ENCODE measurements at regions of chr10 and their contacts with region 1.

Region 1: DNA sequence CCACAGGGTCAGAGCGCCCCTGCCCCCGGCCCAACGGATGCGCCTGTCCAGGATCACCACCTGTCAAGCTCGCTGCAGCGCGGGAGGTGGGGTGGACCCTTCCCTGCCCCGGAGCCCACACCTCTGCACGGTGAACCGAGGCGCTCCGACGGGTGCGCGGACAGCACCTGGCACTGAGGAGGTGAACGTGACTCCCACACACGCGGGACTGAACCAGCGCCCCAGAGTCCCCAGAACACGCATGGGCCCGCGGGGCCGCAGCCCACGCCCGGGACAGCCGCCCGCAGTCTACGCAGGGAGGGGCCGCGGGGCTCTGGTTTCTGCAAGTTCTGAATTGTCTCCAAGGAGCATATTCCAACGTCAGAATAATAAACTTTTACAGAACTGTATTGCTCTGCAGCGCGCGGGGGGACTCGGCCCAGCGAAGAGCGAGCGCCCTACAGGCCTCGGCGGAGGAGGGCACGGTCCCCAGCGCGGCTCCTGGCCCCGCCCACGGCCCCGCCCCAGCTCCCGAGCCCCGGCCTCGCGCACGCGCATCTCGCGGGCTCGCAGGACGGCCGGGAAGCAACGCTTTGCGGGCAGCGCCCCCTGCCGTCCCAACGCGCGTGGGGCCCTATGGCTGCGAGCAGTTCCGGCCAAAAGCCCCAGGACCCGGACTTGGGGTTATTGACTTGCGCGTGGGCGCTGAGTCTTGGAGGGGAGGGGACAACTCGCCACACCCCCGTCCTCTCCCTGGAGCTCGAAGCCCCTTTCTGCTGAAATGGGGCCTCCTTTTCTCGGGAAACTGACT is 29.7 kb downstream of the OAT start:
- DNase-seq: peak; percentile 72
- ATAC-seq: peak; percentile 96
- H3K4me3 ChIP-seq: peak overlapping the region; percentile 22 to 29; a peak in 3 of 4 replicates
- H3K27ac ChIP-seq: peak overlapping the region; percentile 15; the same call in 1 of the 2 replicates
- H3K4me1 ChIP-seq: peaks cover 7 to 10% of the 10 kb centered on the region in 2 experiments
- H3K27me3 ChIP-seq: no peaks in the 10 kb centered on the region
- CTCF ChIP-seq: peak; percentile 96 to 98 (median 96)
- POLR2A ChIP-seq: peak; percentile 65
- RAD21 ChIP-seq: peak; percentile 100

Region 2: GRCh38 chr10:124092860-124093773 is 295.9 kb before region 1 on chr10 and contains the start of gene CHST15:
- CTCF ChIA-PET with region 1: interaction called, 5 read pairs
- POLR2A ChIA-PET with region 1: no interaction called
- RAD21 ChIA-PET with region 1: no interaction called
- intact Hi-C with region 1: loop called (anchors 5 kb)
- DNase-seq: peak; percentile 74
- ATAC-seq: peak; percentile 55
- H3K4me3 ChIP-seq: peak within 1 kb of the TSS; percentile 80 to 82
- H3K27ac ChIP-seq: peak within 1 kb of the TSS; percentile 93
- H3K4me1 ChIP-seq: peaks cover 25 to 44% of the 10 kb centered on the region in 2 experiments
- H3K27me3 ChIP-seq: no peaks in the 10 kb centered on the region
- CTCF ChIP-seq: peak in 1 of 3 experiments; percentile 18; a peak in 1 of 6 replicates
- POLR2A ChIP-seq: peak; percentile 46
- RAD21 ChIP-seq: no peak
- total RNA-seq, gene CHST15: 47.2 TPM

Region 3: GRCh38 chr10:124194199-124194824 is 194.7 kb before region 1 on chr10:
- CTCF ChIA-PET with region 1: interaction called, 8 read pairs
- POLR2A ChIA-PET with region 1: interaction called, 3 read pairs
- RAD21 ChIA-PET with region 1: no interaction called
- intact Hi-C with region 1: loop called (anchors 5 kb)
- DNase-seq: no peak
- ATAC-seq: no peak
- H3K4me3 ChIP-seq: peak overlapping the region in 1 of 2 experiments; percentile 66; a peak in 1 of 4 replicates
- H3K27ac ChIP-seq: no peak overlapping the region
- H3K4me1 ChIP-seq: peaks cover 0 to 15% of the 10 kb centered on the region in 2 experiments; a peak in 1 of 4 replicates
- H3K27me3 ChIP-seq: no peaks in the 10 kb centered on the region
- CTCF ChIP-seq: no peak
- POLR2A ChIP-seq: no peak
- RAD21 ChIP-seq: no peak

Region 4: GRCh38 chr10:124296121-124296812 is 92.8 kb before region 1 on chr10:
- CTCF ChIA-PET with region 1: interaction called, 39 read pairs
- POLR2A ChIA-PET with region 1: interaction called, 5 read pairs
- RAD21 ChIA-PET with region 1: interaction called, 4 to 7 read pairs
- intact Hi-C with region 1: loop called (anchors 1 kb)
- DNase-seq: no peak
- ATAC-seq: peak; percentile 59
- H3K4me3 ChIP-seq: no peak overlapping the region
- H3K27ac ChIP-seq: no peak overlapping the region
- H3K4me1 ChIP-seq: no peaks in the 10 kb centered on the region
- H3K27me3 ChIP-seq: no peaks in the 10 kb centered on the region
- CTCF ChIP-seq: peak in 2 of 3 experiments; percentile 20 to 41; a peak in 3 of 6 replicates
- POLR2A ChIP-seq: no peak
- RAD21 ChIP-seq: peak; percentile 62

Region 5: DNA sequence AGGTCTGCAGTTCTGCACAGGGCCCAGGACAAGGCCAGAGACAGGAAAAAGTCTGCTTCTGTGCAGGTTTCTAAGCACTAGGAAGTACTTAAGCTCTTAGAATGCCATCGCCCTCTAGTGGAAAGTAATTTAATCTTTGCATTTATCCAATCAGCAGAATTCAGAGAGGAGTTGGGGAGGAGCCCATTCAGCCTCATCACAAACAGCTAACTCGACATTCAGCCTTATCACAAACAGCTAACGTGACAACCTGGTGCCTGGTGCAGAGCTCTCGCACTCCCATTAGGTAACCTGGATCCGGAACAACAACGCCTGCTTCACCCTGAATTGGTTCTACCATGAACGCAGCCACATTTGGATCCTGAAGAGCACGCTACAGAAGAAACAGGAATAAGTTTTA is 14.5 kb after region 1 on chr10:
- CTCF ChIA-PET with region 1: interaction called, 16 read pairs
- POLR2A ChIA-PET with region 1: no interaction called
- RAD21 ChIA-PET with region 1: interaction called in 1 of 2 experiments, 3 read pairs
- intact Hi-C with region 1: no loop called
- DNase-seq: peak; percentile 89
- ATAC-seq: peak; percentile 98
- H3K4me3 ChIP-seq: no peak overlapping the region
- H3K27ac ChIP-seq: 0 out of 2 replicates have a peak overlapping the region, but pooled peaks have one; percentile 4
- H3K4me1 ChIP-seq: no peaks in the 10 kb centered on the region
- H3K27me3 ChIP-seq: no peaks in the 10 kb centered on the region
- CTCF ChIP-seq: peak; percentile 70 to 86 (median 75); a peak in 5 of 6 replicates
- POLR2A ChIP-seq: no peak
- RAD21 ChIP-seq: peak; percentile 75

Region 6: GRCh38 chr10:124849111-124849773 is 460.2 kb after region 1 on chr10:
- CTCF ChIA-PET with region 1: no interaction called
- POLR2A ChIA-PET with region 1: no interaction called
- RAD21 ChIA-PET with region 1: no interaction called
- intact Hi-C with region 1: no loop called
- DNase-seq: no peak
- ATAC-seq: no peak
- H3K4me3 ChIP-seq: no peak overlapping the region
- H3K27ac ChIP-seq: no peak overlapping the region
- H3K4me1 ChIP-seq: no peaks in the 10 kb centered on the region
- H3K27me3 ChIP-seq: no peaks in the 10 kb centered on the region
- CTCF ChIP-seq: no peak
- POLR2A ChIP-seq: no peak
- RAD21 ChIP-seq: no peak

Region 7: DNA sequence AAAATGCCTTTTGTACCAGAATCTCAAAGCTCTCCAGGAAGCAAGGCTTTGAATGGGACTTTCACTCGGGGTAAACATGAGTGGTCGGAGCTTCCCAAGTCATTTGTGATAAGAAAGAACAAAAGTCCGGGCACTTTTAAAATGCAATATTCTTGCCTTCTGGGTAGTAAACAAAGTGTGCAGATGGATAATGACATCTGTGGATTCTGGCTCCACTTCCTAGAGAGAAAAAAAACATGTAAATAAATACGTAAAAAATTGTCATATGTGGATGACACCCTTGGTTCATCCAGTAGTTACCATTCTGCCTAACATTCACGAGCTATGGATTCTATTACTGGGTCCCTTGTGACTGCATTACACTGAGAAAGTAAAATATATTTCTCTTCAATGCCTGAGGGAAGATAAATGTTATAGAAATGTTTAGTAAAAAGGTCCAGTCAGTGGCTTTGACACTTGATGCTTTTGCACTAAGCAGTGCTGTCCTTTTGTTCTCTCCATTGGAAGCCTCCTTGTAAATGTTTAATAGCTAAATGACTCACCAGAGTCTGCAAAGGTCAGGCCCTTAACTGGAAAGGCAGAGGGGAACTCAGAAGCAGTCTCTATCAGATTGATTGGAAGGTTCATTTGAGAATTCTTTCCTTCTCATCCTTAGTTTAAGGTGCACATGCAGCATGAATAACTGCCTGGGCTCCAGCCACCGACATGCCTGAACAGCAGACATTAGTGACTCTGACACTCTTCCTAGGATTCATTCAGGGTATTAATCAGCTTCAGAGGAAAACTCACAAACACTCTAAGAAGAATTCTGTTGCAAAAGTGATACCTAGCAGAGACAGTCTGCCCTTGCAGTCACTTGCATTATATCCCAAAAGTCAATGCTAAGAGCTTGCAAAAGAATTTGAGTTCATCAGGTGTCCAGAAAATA is 1318.8 kb after region 1 on chr10:
- CTCF ChIA-PET with region 1: no interaction called
- POLR2A ChIA-PET with region 1: no interaction called
- RAD21 ChIA-PET with region 1: no interaction called
- intact Hi-C with region 1: no loop called
- DNase-seq: peak; percentile 18
- ATAC-seq: peak; percentile 91
- H3K4me3 ChIP-seq: no peak overlapping the region
- H3K27ac ChIP-seq: no peak overlapping the region
- H3K4me1 ChIP-seq: peaks cover 19 to 21% of the 10 kb centered on the region in 2 experiments
- H3K27me3 ChIP-seq: no peaks in the 10 kb centered on the region
- CTCF ChIP-seq: no peak
- POLR2A ChIP-seq: no peak
- RAD21 ChIP-seq: no peak

Measured in HCT116 (cell line).